Astrocyte of the cerebellum (primary cell): ENCODE measurements at regions of chr4 and their contacts with region 1.

Region 1: GRCh38 chr4:45082101-45082500 is 355.7 kb upstream of the GNPDA2 start:
- DNase-seq: no peak
- H3K4me3 ChIP-seq: no peak overlapping the region
- CTCF ChIP-seq: no peak

Region 2: DNA sequence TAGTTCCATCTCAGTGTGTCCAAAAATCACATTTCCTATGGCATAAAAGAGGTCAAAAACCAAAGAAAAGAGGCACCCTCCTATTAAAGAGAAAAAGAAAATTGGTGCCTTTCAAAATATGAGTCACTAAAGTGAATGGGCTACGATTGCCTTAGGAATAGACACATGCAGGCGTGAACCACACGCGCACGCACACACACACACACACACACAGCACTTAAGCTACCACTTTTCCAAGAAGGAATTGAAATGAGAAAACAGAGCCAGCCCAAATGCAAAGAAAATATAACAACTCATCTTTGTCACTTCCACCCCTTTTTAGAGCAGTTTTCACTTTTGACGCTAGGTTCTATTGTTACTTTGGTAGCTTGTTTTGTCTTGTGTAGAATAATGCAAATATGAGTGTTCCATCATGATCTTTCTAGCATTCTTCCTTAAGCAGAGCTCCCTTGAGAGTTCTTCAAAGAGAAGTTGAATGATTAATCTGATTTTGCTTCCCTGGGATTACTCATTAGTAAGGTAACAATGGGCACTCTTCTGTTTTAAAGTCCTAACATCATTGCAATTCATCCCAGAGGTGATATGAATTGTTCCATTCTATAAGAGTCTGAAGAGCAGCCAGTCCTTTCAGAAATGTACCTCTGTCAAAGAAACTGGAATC is 116.5 kb before region 1 on chr4:
- in situ Hi-C with region 1: loop called (anchors 5 kb)
- DNase-seq: no peak
- H3K4me3 ChIP-seq: no peak overlapping the region
- CTCF ChIP-seq: no peak